Activated naive CD4-positive, alpha-beta T cell treated with anti-CD3 and anti-CD28 coated beads for 36 hours (primary cell): ENCODE measurements at regions of chr11 and their contacts with region 1.

Region 1: GRCh38 chr11:104705490-104706190 is 192.6 kb downstream of the CASP12 start:
- DNase-seq: peak; percentile 89
- H3K4me3 Mint-ChIP-seq: peak overlapping the region; percentile 61
- H3K27ac Mint-ChIP-seq: peak overlapping the region; percentile 80
- H3K4me1 Mint-ChIP-seq: peaks cover 48% of the 10 kb centered on the region
- H3K27me3 Mint-ChIP-seq: no peaks in the 10 kb centered on the region

Region 2: DNA sequence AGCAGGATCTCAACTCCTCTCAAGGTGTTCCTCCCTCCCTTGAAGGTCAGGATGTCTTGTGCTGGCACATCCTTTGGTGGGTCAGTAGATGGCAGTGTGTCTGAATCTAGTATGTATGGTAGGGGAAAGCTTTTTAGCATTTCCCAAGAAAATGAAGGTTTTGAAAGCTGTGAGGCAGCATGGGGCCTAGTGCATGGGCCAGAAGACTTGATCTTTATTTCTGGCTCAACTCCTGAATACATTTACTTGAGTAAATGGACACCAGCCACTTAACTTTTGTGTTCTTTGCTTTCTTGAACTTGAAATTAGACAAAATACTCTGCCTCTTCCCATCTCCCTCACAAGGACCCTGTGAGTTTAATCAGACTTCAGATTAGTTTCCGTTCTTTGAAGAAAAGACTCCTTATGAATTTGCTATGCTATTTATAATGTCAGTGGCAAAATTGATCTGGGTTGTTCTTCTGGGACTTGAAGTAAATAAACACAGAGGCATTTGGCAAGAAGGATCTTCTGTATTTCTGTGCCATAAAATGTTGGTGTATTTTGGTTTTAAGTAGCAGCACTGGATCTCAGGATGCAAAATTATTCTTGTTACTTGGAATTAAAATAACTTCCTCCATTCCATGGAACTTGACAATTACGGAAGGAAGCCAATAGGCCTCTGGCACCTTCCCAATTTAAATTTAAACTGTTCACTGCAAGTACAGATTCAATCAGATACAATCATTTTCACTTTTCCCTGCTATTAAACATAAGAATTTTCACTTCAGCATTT is 96.1 kb before region 1 on chr11:
- CTCF ChIA-PET with region 1: interaction called, 4 read pairs
- intact Hi-C with region 1: loop called (anchors 1 kb)
- DNase-seq: peak; percentile 35
- H3K4me3 Mint-ChIP-seq: no peak overlapping the region
- H3K27ac Mint-ChIP-seq: no peak overlapping the region
- H3K4me1 Mint-ChIP-seq: peaks cover 13% of the 10 kb centered on the region
- H3K27me3 Mint-ChIP-seq: no peaks in the 10 kb centered on the region

Region 3: DNA sequence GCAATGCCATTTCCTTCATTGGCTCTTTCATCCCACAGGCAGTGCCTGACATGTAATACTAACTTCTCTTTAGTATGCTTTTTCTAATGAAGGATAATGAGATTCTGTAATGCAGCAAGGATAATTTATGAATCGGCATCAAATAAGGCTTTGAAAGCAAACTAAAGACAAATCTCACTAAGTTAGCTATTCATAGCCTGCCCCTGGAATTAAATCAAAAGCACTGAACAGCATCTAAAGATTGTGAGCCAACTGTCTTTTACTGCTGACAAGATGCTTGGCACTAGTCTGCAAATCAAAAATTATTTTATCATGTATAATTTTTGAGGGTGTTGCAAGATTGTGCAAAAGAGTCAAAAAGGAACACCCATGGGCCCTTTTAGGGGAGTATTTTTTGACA is 72.4 kb before region 1 on chr11:
- CTCF ChIA-PET with region 1: no interaction called
- intact Hi-C with region 1: no loop called
- DNase-seq: no peak
- H3K4me3 Mint-ChIP-seq: no peak overlapping the region
- H3K27ac Mint-ChIP-seq: no peak overlapping the region
- H3K4me1 Mint-ChIP-seq: no peaks in the 10 kb centered on the region
- H3K27me3 Mint-ChIP-seq: no peaks in the 10 kb centered on the region

Region 4: DNA sequence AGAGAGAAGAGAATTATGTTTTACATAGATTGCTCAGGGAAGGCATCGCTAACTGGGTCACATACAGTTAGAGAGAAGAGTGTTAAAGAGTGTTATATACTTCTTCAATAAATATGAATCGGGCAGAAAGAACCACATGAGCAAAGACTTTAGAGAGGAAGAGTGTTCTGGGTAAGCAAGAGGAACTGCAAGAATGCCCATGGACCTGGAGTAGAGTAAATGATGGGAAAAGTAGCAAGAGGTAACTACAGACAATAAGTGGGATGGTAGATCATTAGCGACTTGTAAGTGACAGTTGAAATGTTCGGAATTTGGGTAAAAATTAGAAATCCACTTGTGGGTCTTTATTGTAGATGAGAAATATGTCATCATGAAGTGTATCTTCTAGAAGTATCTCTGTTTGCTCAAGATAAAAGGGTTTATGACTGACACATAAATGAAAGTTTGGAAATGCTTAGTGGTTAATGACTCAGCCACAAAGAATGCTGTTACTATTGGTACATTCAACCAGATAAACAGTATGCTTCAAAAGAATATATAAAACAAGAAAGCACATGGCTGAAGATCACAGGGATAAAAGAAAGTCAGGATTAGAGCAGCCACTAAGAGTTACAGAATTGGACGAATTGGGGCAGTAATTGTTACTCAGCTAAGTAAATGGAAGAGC is 36.7 kb before region 1 on chr11:
- CTCF ChIA-PET with region 1: no interaction called
- intact Hi-C with region 1: loop called (anchors 1 kb)
- DNase-seq: no peak
- H3K4me3 Mint-ChIP-seq: no peak overlapping the region
- H3K27ac Mint-ChIP-seq: no peak overlapping the region
- H3K4me1 Mint-ChIP-seq: peaks cover 13% of the 10 kb centered on the region
- H3K27me3 Mint-ChIP-seq: no peaks in the 10 kb centered on the region

Region 5: GRCh38 chr11:104764710-104765045 is 59.0 kb after region 1 on chr11:
- CTCF ChIA-PET with region 1: no interaction called
- intact Hi-C with region 1: no loop called
- DNase-seq: no peak
- H3K4me3 Mint-ChIP-seq: no peak overlapping the region
- H3K27ac Mint-ChIP-seq: no peak overlapping the region
- H3K4me1 Mint-ChIP-seq: peaks cover 13% of the 10 kb centered on the region
- H3K27me3 Mint-ChIP-seq: no peaks in the 10 kb centered on the region

Region 6: GRCh38 chr11:104876861-104877431 is 171.3 kb after region 1 on chr11:
- CTCF ChIA-PET with region 1: no interaction called
- intact Hi-C with region 1: loop called (anchors 1 kb)
- DNase-seq: no peak
- H3K4me3 Mint-ChIP-seq: peak overlapping the region; percentile 22
- H3K27ac Mint-ChIP-seq: peak overlapping the region; percentile 59
- H3K4me1 Mint-ChIP-seq: peaks cover 32% of the 10 kb centered on the region
- H3K27me3 Mint-ChIP-seq: no peaks in the 10 kb centered on the region

Region 7: GRCh38 chr11:104968355-104968855 is 262.8 kb after region 1 on chr11 and contains the start of gene CASP4:
- CTCF ChIA-PET with region 1: no interaction called
- intact Hi-C with region 1: loop called (anchors 1 kb)
- DNase-seq: peak; percentile 21
- H3K4me3 Mint-ChIP-seq: peak within 1 kb of the TSS; percentile 86
- H3K27ac Mint-ChIP-seq: peak within 1 kb of the TSS; percentile 91
- H3K4me1 Mint-ChIP-seq: peaks cover 33% of the 10 kb centered on the region
- H3K27me3 Mint-ChIP-seq: no peaks in the 10 kb centered on the region
- total RNA-seq, gene CASP4: 47.9 to 48.7 TPM

Region 8: DNA sequence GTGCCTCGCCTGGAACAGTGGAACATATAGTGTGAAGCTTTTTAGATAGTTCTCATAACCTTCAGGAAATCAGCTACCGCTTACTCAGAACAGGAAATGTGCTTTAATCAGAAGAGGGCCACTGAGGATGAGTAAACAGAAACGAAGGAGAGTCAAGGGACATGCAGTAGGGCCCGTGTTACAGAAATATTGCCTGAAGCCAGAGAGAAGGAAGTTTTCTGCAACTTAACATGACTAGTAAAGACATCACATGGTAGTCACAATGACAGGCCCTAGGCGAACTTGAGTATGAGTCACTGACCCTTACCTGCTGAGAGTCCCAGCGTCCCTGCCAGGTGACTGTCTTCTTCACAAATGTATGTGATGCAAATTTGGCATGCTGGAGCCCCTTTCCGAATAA is 394.6 kb after region 1 on chr11:
- CTCF ChIA-PET with region 1: no interaction called
- intact Hi-C with region 1: loop called (anchors 5 kb)
- DNase-seq: peak; percentile 42
- H3K4me3 Mint-ChIP-seq: no peak overlapping the region
- H3K27ac Mint-ChIP-seq: no peak overlapping the region
- H3K4me1 Mint-ChIP-seq: peaks cover 34% of the 10 kb centered on the region
- H3K27me3 Mint-ChIP-seq: no peaks in the 10 kb centered on the region

Region 9: DNA sequence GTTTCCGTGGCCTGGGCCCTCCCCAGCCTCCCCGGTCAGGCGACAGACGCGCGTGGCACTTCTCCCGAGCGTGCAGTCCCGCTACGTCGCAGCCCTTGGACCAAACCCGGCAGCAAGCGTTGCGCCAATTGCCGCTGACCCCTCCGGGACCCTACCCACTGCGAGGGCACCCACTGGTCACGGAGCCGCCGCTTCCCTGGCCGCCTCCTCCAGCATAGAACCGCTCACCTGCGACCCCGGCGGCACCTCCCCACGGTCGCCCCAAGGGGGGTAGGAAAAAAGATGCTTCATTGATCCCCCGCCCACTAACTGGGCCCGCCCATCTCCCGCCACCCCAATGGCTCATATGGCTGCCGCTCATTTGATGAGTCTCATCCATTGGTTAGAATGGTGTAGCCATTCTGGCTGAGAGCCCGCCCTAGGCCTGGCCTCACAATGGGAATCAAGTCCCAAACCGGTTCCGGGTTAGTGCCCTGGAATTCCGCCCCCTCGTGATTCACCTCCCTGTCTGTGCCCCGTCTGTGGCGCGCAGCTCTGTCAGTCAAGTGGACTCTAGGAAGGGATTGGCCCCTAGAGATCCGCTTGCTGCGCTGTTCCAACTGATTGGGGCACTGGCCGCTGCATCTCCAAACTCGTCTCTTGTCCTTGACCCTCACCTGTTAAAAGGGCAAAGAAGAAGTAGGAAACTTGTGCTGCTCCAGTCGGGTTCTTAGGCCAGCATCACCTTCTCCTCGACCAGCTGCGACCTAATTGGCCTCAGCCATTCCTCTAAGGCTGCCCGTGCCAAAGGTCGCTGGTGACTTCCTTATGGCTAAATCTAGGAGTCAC is 1316.5 kb after region 1 on chr11 and contains the start of gene MSANTD4:
- CTCF ChIA-PET with region 1: no interaction called
- intact Hi-C with region 1: loop called (anchors 1 kb)
- DNase-seq: peak; percentile 99
- H3K4me3 Mint-ChIP-seq: peak within 1 kb of the TSS; percentile 93
- H3K27ac Mint-ChIP-seq: peak within 1 kb of the TSS; percentile 85
- H3K4me1 Mint-ChIP-seq: peaks cover 40% of the 10 kb centered on the region
- H3K27me3 Mint-ChIP-seq: peaks cover 3% of the 10 kb centered on the region
- total RNA-seq, gene MSANTD4: 11.5 to 12.0 TPM